Ovary (tissue), 10 donors: ENCODE measurements at regions of chr13 and their contacts with region 1.

Region 1: GRCh38 chr13:76886292-76887075 is at the start of gene KCTD12:
- DNase-seq: peak; percentile 76 to 87 (median 85)
- H3K4me3 ChIP-seq: peak within 1 kb of the TSS; percentile 82
- H3K27ac ChIP-seq: peak within 1 kb of the TSS; percentile 73 to 86
- H3K4me1 ChIP-seq: peaks cover 1% of the 10 kb centered on the region
- H3K27me3 ChIP-seq: no peaks in the 10 kb centered on the region
- CTCF ChIP-seq: peak in 2 of 3 donors; percentile 53 to 60
- EP300 ChIP-seq: no peak
- POLR2A ChIP-seq: peak; percentile 39
- total RNA-seq, gene KCTD12: 44.1 to 91.8 (median 84.4) TPM

Region 2: GRCh38 chr13:75771818-75772217 is 1114.7 kb before region 1 on chr13:
- intact Hi-C with region 1: no loop called
- DNase-seq: no peak
- H3K4me3 ChIP-seq: no peak overlapping the region
- H3K27ac ChIP-seq: no peak overlapping the region
- H3K4me1 ChIP-seq: peaks cover 3% of the 10 kb centered on the region
- H3K27me3 ChIP-seq: no peaks in the 10 kb centered on the region
- CTCF ChIP-seq: no peak
- EP300 ChIP-seq: no peak
- POLR2A ChIP-seq: no peak

Region 3: GRCh38 chr13:76473552-76474134 is 412.8 kb before region 1 on chr13:
- intact Hi-C with region 1: loop called in 1 of 4 experiments (anchors 10 kb)
- DNase-seq: peak; percentile 55 to 81 (median 63)
- H3K4me3 ChIP-seq: no peak overlapping the region
- H3K27ac ChIP-seq: no peak overlapping the region
- H3K4me1 ChIP-seq: no peaks in the 10 kb centered on the region
- H3K27me3 ChIP-seq: no peaks in the 10 kb centered on the region
- CTCF ChIP-seq: peak; percentile 74 to 84 (median 79)
- EP300 ChIP-seq: no peak
- POLR2A ChIP-seq: no peak

Region 4: DNA sequence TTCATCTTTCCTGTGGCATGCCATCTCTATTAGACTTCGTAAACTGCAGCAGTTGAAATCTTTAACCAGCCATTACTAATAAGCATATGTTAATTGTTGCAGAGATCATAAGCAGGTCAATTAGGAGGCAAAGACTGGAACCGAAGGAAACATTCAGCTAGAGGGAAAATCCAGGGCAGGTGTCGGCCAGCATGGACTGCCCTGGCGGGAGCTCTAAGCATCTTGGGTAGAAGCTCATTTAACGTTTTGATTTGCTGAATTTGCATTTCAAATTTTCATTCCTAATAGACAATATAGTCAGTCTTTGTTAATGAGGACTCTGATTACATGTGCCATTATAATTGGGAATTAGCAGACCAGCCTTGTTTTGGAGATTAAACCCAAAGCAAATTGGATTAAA is 1478.2 kb after region 1 on chr13:
- intact Hi-C with region 1: no loop called
- DNase-seq: no peak
- H3K4me3 ChIP-seq: no peak overlapping the region
- H3K27ac ChIP-seq: no peak overlapping the region
- H3K4me1 ChIP-seq: no peaks in the 10 kb centered on the region
- H3K27me3 ChIP-seq: no peaks in the 10 kb centered on the region
- CTCF ChIP-seq: no peak
- EP300 ChIP-seq: no peak
- POLR2A ChIP-seq: no peak